SK-N-SH (cell line): ENCODE measurements at regions of chr3 and their contacts with region 1.

Region 1: GRCh38 chr3:193040836-193041672 is 123.4 kb upstream of the MB21D2 start:
- DNase-seq: peak; percentile 48
- H3K4me3 ChIP-seq: no peak overlapping the region
- H3K27ac ChIP-seq: no peak overlapping the region
- H3K4me1 ChIP-seq: no peaks in the 10 kb centered on the region
- H3K27me3 ChIP-seq: no peaks in the 10 kb centered on the region
- CTCF ChIP-seq: peak; percentile 73
- EP300 ChIP-seq: no peak
- RAD21 ChIP-seq: peak; percentile 77

Region 2: DNA sequence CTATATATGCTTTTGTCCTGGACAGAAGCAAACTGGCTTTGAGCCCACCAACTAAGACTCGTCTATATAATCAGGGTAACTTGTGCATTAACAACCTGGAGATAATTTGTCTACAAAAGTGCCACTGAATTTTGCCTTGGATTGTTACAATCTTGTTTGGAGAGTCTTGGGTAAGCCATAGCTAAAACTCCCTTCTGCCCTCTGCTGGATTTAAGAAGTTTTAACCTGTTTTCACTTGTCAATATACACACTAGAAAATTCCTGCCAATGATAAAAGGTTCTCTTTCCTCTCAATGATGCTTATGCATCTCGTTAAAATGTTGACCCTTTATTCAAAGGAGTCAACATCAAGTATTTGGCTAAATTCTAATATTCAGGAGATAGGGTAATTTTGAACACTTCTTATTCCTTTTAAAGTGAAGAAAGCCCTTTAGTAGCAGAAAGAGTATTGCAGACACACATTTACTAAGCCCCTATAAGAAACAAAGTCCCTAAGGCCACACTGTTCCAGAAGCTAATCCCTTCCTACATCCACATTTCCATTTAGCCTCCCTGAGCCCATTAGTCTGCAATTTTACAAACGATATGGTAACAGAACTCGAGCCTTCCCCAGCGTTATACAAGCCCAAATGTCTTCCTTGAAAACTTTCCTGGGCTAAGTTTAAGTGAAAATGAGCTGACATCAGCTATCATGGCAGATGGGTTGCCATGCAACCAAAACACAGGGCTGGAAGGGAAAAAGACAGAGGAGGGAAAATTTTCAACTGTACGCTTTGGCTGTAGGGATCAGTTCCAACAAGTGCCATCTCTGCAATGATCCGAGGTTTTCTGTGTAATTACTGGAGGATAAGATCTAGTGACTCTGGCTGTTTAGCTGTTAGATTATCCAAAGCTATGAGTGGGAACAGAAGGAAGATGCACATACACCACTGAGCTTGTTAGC is 237.8 kb before region 1 on chr3:
- CTCF ChIA-PET with region 1: interaction called, 10 read pairs
- POLR2A ChIA-PET with region 1: no interaction called
- DNase-seq: peak; percentile 42
- H3K4me3 ChIP-seq: no peak overlapping the region
- H3K27ac ChIP-seq: no peak overlapping the region
- H3K4me1 ChIP-seq: peaks cover 0 to 3% of the 10 kb centered on the region in 2 experiments; a peak in 1 of 4 replicates
- H3K27me3 ChIP-seq: no peaks in the 10 kb centered on the region
- CTCF ChIP-seq: peak; percentile 69
- EP300 ChIP-seq: no peak
- RAD21 ChIP-seq: peak; percentile 55

Region 3: DNA sequence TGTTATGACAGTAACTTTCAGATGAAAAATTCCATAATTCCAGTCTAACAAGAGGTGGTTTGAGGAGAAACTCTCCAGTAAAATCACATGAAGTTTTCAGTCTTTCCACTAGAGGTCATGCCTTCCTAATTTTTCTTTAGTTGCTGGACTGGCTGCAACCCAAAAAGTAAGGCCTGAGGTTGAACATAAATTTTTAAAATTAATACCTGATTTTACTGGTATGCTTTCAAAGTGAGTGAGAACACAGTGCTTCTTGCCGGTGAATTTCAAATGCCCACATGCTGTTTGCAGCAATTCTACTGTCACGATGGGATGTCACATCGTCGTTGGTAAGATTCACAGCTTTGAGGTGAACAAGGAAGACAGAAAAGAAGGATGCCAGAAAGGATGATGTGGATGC is 224.7 kb before region 1 on chr3:
- CTCF ChIA-PET with region 1: interaction called, 138 read pairs
- POLR2A ChIA-PET with region 1: no interaction called
- DNase-seq: peak; percentile 41
- H3K4me3 ChIP-seq: peak overlapping the region in 1 of 2 experiments; percentile 8; a peak in 1 of 4 replicates
- H3K27ac ChIP-seq: no peak overlapping the region
- H3K4me1 ChIP-seq: peaks cover 2 to 8% of the 10 kb centered on the region in 2 experiments; a peak in 2 of 4 replicates
- H3K27me3 ChIP-seq: no peaks in the 10 kb centered on the region
- CTCF ChIP-seq: peak; percentile 79
- EP300 ChIP-seq: no peak
- RAD21 ChIP-seq: peak; percentile 93

Region 4: DNA sequence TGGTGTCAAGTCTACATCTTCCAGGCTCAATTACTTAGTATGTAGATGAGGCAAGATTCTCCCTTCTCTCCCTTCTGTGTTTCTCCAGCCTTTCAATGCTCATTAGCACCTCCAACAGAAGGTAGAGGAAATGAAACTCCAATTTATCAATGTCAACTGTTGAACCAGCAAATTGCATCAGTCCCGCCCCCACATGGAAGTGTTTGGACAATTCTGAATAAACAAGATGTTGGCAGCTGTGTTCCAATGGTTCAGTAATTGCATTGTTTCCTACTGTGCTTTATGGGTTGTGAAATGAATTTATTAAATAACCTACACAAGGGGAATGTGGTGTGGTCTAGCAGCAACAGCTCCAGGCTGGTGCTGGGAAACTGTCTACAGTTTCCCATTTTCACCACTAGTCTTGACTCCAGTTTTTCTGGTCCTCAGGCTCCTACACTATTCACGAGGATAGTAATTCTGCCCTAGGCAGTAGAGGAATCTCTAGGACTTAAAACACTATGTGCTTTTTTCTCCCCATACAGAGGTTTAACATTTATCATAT is 215.3 kb before region 1 on chr3:
- CTCF ChIA-PET with region 1: interaction called, 10 read pairs
- POLR2A ChIA-PET with region 1: no interaction called
- DNase-seq: no peak
- H3K4me3 ChIP-seq: no peak overlapping the region
- H3K27ac ChIP-seq: no peak overlapping the region
- H3K4me1 ChIP-seq: peaks cover 0 to 5% of the 10 kb centered on the region in 2 experiments; a peak in 1 of 4 replicates
- H3K27me3 ChIP-seq: no peaks in the 10 kb centered on the region
- CTCF ChIP-seq: peak; percentile 20; the same call in 1 of the 2 replicates
- EP300 ChIP-seq: no peak
- RAD21 ChIP-seq: no peak

Region 5: GRCh38 chr3:192917404-192918274 is 123.4 kb before region 1 on chr3 and contains the start of gene MB21D2:
- CTCF ChIA-PET with region 1: interaction called, 14 read pairs
- POLR2A ChIA-PET with region 1: no interaction called
- DNase-seq: peak; percentile 94
- H3K4me3 ChIP-seq: peak within 1 kb of the TSS; percentile 91 to 98
- H3K27ac ChIP-seq: peak within 1 kb of the TSS; percentile 85 to 95
- H3K4me1 ChIP-seq: peaks cover 7 to 15% of the 10 kb centered on the region in 2 experiments; a peak in 3 of 4 replicates
- H3K27me3 ChIP-seq: no peaks in the 10 kb centered on the region
- CTCF ChIP-seq: no peak
- EP300 ChIP-seq: no peak
- RAD21 ChIP-seq: peak; percentile 22; the same call in 1 of the 2 replicates
- polyA plus RNA-seq, gene MB21D2: 12.7 and 15.4 TPM in 2 replicates

Region 6: DNA sequence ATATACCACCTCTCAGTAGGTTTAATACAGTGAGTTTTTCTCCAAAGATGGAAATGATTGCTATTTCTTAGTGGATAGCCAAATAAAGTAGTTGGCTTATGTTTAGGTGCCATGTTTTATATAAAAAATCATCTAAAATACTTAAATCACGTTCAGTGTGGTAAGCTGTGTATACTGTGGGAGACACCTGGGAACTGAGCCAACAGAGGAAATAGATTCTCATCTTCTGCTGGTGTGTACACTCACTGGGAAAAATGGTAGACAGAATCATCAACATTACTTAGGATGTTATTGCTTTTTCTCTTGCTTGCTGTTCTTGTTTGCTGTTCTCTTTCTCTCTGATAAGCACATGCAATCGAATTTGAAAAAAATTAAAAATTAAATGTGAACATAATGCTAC is 10.8 kb before region 1 on chr3:
- CTCF ChIA-PET with region 1: interaction called, 25 read pairs
- POLR2A ChIA-PET with region 1: no interaction called
- DNase-seq: no peak
- H3K4me3 ChIP-seq: no peak overlapping the region
- H3K27ac ChIP-seq: no peak overlapping the region
- H3K4me1 ChIP-seq: no peaks in the 10 kb centered on the region
- H3K27me3 ChIP-seq: no peaks in the 10 kb centered on the region
- CTCF ChIP-seq: no peak
- EP300 ChIP-seq: no peak
- RAD21 ChIP-seq: no peak

Region 7: GRCh38 chr3:193068365-193068764 is 27.3 kb after region 1 on chr3:
- CTCF ChIA-PET with region 1: no interaction called
- POLR2A ChIA-PET with region 1: no interaction called
- DNase-seq: no peak
- H3K4me3 ChIP-seq: no peak overlapping the region
- H3K27ac ChIP-seq: no peak overlapping the region
- H3K4me1 ChIP-seq: no peaks in the 10 kb centered on the region
- H3K27me3 ChIP-seq: no peaks in the 10 kb centered on the region; the same call in 1 of the 2 replicates
- CTCF ChIP-seq: no peak
- EP300 ChIP-seq: no peak
- RAD21 ChIP-seq: no peak

Region 8: DNA sequence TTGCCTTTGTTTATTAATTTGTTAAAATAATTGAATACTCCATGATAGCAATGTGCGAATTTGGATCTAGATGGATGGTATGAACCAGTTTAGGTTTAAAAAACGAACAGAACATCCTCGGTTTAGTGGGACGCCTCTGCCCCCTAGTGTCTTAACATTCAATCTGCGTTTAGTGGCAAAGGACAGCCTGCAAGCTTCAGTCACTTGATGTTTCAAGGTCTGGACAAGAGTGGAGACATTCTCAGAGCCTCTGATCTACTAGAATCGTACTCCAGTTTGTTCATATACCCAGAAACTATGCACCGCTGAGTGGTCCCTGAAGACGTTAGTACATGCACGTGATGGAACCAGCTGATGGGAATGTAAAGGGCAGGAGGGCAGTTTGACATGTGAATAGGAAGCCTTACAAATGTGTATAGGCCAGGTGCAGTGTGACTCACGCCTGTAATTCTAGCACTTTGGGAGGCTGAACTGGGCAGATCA is 531.4 kb after region 1 on chr3:
- CTCF ChIA-PET with region 1: interaction called, 12 read pairs
- POLR2A ChIA-PET with region 1: no interaction called
- DNase-seq: peak; percentile 61
- H3K4me3 ChIP-seq: peak overlapping the region in 1 of 2 experiments; percentile 14; a peak in 1 of 4 replicates
- H3K27ac ChIP-seq: no peak overlapping the region
- H3K4me1 ChIP-seq: no peaks in the 10 kb centered on the region
- H3K27me3 ChIP-seq: 0 out of 2 replicates have a peak, but pooled peaks cover 6% of the 10 kb centered on the region
- CTCF ChIP-seq: peak; percentile 89
- EP300 ChIP-seq: no peak
- RAD21 ChIP-seq: peak; percentile 95